A673 (cell line): ENCODE measurements at regions of chr6 and their contacts with region 1.

Region 1: GRCh38 chr6:148947621-148948444 is 201.0 kb downstream of the UST start:
- DNase-seq: peak; percentile 78
- H3K4me3 ChIP-seq: no peak overlapping the region
- H3K27ac ChIP-seq: no peak overlapping the region
- H3K4me1 ChIP-seq: no peaks in the 10 kb centered on the region
- H3K27me3 ChIP-seq: no peaks in the 10 kb centered on the region
- CTCF ChIP-seq: peak; percentile 86

Region 2: GRCh38 chr6:148559848-148560433 is 387.9 kb before region 1 on chr6:
- CTCF ChIA-PET with region 1: interaction called, 3 read pairs
- POLR2A ChIA-PET with region 1: no interaction called
- intact Hi-C with region 1: loop called (anchors 1 kb)
- DNase-seq: peak; percentile 76
- H3K4me3 ChIP-seq: peak overlapping the region; percentile 46
- H3K27ac ChIP-seq: no peak overlapping the region
- H3K4me1 ChIP-seq: no peaks in the 10 kb centered on the region
- H3K27me3 ChIP-seq: no peaks in the 10 kb centered on the region
- CTCF ChIP-seq: peak; percentile 93

Region 3: GRCh38 chr6:148578245-148578732 is 369.5 kb before region 1 on chr6:
- CTCF ChIA-PET with region 1: no interaction called
- POLR2A ChIA-PET with region 1: no interaction called
- intact Hi-C with region 1: loop called (anchors 5 kb)
- DNase-seq: peak; percentile 74
- H3K4me3 ChIP-seq: no peak overlapping the region
- H3K27ac ChIP-seq: no peak overlapping the region
- H3K4me1 ChIP-seq: no peaks in the 10 kb centered on the region
- H3K27me3 ChIP-seq: peaks cover 6% of the 10 kb centered on the region
- CTCF ChIP-seq: peak; percentile 87

Region 4: DNA sequence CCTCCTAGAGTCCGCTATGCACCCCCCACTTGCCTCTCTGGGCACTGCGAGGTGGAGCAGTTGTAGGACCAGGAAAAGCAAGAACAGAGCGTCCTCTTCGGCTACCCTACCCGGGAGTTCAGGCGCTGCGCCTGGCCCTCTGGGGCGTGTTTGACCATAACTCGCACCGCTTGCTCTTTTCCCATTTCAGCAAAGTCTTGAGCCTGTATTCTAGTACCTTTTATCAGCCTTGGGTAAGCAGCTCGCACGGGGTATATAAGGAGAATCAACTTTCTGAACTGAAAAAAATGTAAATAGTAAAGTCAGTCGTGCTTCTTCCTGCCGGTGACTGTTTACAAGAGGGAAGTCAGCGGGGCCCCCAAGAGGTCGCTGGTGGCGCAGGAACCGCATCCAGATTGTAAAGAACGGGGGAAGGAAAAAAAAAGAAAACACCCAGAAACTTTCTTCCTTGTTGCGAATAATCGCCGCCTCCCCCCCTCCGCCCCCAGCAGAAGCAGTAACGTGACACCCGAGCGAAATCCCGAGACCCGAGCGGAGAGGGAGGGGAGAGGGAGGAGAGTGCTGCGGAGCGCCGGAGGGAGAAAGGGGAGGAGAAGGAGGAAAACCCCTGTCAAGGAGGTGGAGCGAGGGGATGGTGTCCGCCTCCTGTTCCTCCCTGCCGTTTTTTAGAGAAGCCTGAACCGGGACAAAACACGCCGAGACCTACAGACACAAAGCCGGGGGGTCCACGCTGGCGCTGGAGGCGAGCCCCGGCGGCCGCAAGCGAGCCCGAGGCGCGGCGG is 201.3 kb before region 1 on chr6 and contains the start of gene UST:
- CTCF ChIA-PET with region 1: no interaction called
- POLR2A ChIA-PET with region 1: no interaction called
- intact Hi-C with region 1: loop called (anchors 1 kb)
- DNase-seq: peak; percentile 90
- H3K4me3 ChIP-seq: peak within 1 kb of the TSS; percentile 54
- H3K27ac ChIP-seq: no peak within 1 kb of the TSS
- H3K4me1 ChIP-seq: peaks cover 7% of the 10 kb centered on the region
- H3K27me3 ChIP-seq: peaks cover 35% of the 10 kb centered on the region
- CTCF ChIP-seq: peak; percentile 56
- total RNA-seq, gene UST: 1.5 and 1.7 TPM in 2 replicates

Region 5: GRCh38 chr6:148999929-149000468 is 52.2 kb after region 1 on chr6:
- CTCF ChIA-PET with region 1: no interaction called
- POLR2A ChIA-PET with region 1: no interaction called
- intact Hi-C with region 1: no loop called
- DNase-seq: no peak
- H3K4me3 ChIP-seq: no peak overlapping the region
- H3K27ac ChIP-seq: no peak overlapping the region
- H3K4me1 ChIP-seq: no peaks in the 10 kb centered on the region
- H3K27me3 ChIP-seq: no peaks in the 10 kb centered on the region
- CTCF ChIP-seq: no peak

Region 6: GRCh38 chr6:150586850-150587359 is 1639.1 kb after region 1 on chr6:
- CTCF ChIA-PET with region 1: no interaction called
- POLR2A ChIA-PET with region 1: no interaction called
- intact Hi-C with region 1: no loop called
- DNase-seq: no peak
- H3K4me3 ChIP-seq: no peak overlapping the region
- H3K27ac ChIP-seq: no peak overlapping the region
- H3K4me1 ChIP-seq: peaks cover 16% of the 10 kb centered on the region
- H3K27me3 ChIP-seq: no peaks in the 10 kb centered on the region
- CTCF ChIP-seq: no peak